Activated T-helper 2 cell treated with anti-CD3 and anti-CD28 coated beads, Interferon-gamma antibody, Interleukin-2, Interleukin-4, amounts not matched to agents 10 μg/mL and 5 μg/mL and 100 μg/mL, durations not matched to agents 14 hours and 24 hours and 36 hours (primary cell): ENCODE measurements at regions of chr11 and their contacts with region 1.

Region 1: GRCh38 chr11:128039140-128040021 is 548.0 kb downstream of the ETS1 start:
- DNase-seq: peak; percentile 80
- H3K4me3 Mint-ChIP-seq: peak overlapping the region; percentile 35
- H3K27ac Mint-ChIP-seq: peak overlapping the region; percentile 91
- H3K4me1 Mint-ChIP-seq: peaks cover 46% of the 10 kb centered on the region
- H3K27me3 Mint-ChIP-seq: no peaks in the 10 kb centered on the region

Region 2: DNA sequence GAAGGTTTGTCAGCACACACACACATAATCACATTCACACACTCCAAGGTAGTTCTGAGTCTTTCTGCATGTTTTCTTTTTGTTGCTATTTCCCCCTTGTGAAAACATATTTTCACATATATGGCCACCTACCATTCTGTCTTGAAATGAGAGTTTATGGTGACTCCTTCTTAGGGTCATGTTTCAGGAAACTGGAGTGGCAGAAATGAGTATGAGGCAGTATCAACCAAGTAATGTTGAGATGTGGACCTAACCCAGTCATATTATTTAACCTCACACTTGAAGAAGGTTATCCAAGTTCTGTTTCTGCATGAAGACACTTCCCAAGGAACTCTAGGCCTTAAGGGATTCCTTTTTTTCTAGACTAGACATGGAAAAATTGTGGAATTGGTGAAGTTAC is 66.6 kb after region 1 on chr11:
- intact Hi-C with region 1: loop called (anchors 2 kb)
- DNase-seq: no peak
- H3K4me3 Mint-ChIP-seq: no peak overlapping the region
- H3K27ac Mint-ChIP-seq: no peak overlapping the region
- H3K4me1 Mint-ChIP-seq: peaks cover 12% of the 10 kb centered on the region
- H3K27me3 Mint-ChIP-seq: peaks cover 1% of the 10 kb centered on the region

Region 3: GRCh38 chr11:128172046-128172878 is 132.9 kb after region 1 on chr11:
- intact Hi-C with region 1: loop called (anchors 5 kb)
- DNase-seq: peak; percentile 72
- H3K4me3 Mint-ChIP-seq: no peak overlapping the region
- H3K27ac Mint-ChIP-seq: peak overlapping the region; percentile 54
- H3K4me1 Mint-ChIP-seq: peaks cover 35% of the 10 kb centered on the region
- H3K27me3 Mint-ChIP-seq: peaks cover 6% of the 10 kb centered on the region

Region 4: GRCh38 chr11:128232588-128232987 is 193.2 kb after region 1 on chr11:
- intact Hi-C with region 1: loop called (anchors 1 kb)
- DNase-seq: no peak
- H3K4me3 Mint-ChIP-seq: no peak overlapping the region
- H3K27ac Mint-ChIP-seq: peak overlapping the region; percentile 81
- H3K4me1 Mint-ChIP-seq: peaks cover 58% of the 10 kb centered on the region
- H3K27me3 Mint-ChIP-seq: no peaks in the 10 kb centered on the region

Region 5: DNA sequence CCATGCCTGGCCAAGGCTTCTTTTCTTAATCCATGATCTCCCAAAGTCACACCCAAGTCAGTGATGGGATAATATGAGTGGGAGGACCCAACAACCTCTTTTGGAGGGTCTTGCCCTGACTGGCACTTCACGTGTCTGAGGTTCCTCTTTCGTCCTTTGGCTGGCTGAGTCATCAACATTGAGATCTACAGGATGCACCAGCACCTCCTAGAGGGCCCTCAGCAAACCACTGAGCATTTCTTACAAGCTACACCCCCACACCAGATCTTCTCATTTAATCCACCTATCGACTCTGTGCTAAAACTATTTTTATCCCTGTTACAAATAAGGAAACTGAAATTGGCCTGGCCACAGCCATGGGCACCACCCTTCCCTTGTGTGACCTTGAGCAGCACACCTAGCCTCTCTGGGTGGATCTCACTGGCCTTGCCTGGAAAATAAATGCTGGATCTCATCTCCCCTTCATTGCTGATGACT is 717.9 kb after region 1 on chr11:
- intact Hi-C with region 1: loop called (anchors 5 kb)
- DNase-seq: peak; percentile 53
- H3K4me3 Mint-ChIP-seq: peak overlapping the region; percentile 45
- H3K27ac Mint-ChIP-seq: peak overlapping the region; percentile 90
- H3K4me1 Mint-ChIP-seq: peaks cover 55% of the 10 kb centered on the region
- H3K27me3 Mint-ChIP-seq: no peaks in the 10 kb centered on the region

Region 6: DNA sequence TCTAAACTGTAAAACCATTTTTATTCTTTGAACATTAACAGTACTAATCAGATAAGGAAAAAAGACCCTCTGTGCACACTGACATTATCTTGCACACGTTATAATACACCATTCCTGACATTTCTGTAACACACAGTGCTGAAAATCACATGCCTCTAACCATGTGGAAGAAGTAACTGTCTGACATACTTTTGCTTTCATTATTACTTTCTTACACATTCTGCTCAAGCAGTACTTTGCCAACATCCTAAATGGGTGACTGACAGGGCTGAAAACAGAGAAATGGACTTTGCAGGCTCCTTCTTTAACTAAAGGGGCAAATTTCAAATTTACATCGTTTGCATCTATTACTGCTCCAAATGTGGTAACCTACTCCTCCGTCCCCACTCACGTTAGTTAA is 926.1 kb after region 1 on chr11:
- intact Hi-C with region 1: loop called (anchors 10 kb)
- DNase-seq: no peak
- H3K4me3 Mint-ChIP-seq: peak overlapping the region; percentile 9
- H3K27ac Mint-ChIP-seq: no peak overlapping the region
- H3K4me1 Mint-ChIP-seq: peaks cover 55% of the 10 kb centered on the region
- H3K27me3 Mint-ChIP-seq: peaks cover 1% of the 10 kb centered on the region